SK-N-SH (cell line): ENCODE measurements at regions of chr19 and their contacts with region 1.

Region 1: DNA sequence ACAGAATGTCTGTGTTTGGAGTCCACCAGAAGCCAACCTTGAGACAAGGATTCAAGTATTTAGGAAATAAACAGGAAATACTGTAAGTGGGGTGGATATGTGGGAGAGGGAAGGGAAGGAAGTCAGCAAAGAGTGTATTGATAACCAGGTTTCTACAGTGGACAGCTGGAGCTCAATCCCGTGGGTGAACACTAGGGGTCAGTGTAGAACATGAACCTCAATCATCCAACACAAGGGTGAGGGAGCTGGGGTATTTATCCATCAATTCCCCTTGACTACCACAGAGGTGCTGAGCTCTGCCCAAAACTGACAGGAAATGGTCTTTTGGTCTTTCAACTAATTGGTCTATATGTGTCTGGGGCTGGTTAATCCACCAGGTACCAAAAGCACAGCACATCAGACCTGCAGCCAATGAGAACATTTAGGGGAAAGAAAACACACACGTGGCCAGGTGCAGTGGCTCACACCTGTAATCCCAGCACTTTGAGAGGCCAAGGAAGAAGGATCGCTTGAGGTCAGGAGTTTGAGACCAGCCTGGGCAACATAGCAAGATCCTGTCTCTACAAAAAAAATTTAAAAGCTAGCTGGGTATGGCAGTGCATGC is 5.6 kb upstream of the SYDE1 start:
- DNase-seq: peak; percentile 54
- H3K4me3 ChIP-seq: no peak overlapping the region; a peak in 1 of 4 replicates
- H3K27ac ChIP-seq: no peak overlapping the region
- H3K4me1 ChIP-seq: no peaks in the 10 kb centered on the region
- H3K27me3 ChIP-seq: peaks cover 27% of the 10 kb centered on the region; the same call in 1 of the 2 replicates
- CTCF ChIP-seq: peak; percentile 66
- EP300 ChIP-seq: no peak
- RAD21 ChIP-seq: peak; percentile 63

Region 2: GRCh38 chr19:14496028-14496833 is 605.4 kb before region 1 on chr19 and contains the start of gene GIPC1:
- CTCF ChIA-PET with region 1: no interaction called
- POLR2A ChIA-PET with region 1: no interaction called
- DNase-seq: peak; percentile 100
- H3K4me3 ChIP-seq: peak within 1 kb of the TSS; percentile 65 to 93
- H3K27ac ChIP-seq: peak within 1 kb of the TSS in 1 of 2 experiments; percentile 67; a peak in 2 of 4 replicates
- H3K4me1 ChIP-seq: peaks cover 4 to 25% of the 10 kb centered on the region in 2 experiments; a peak in 2 of 4 replicates
- H3K27me3 ChIP-seq: no peaks in the 10 kb centered on the region
- CTCF ChIP-seq: no peak
- EP300 ChIP-seq: peak in 1 of 2 experiments; percentile 44; a peak in 3 of 4 replicates
- RAD21 ChIP-seq: no peak
- polyA plus RNA-seq, gene GIPC1: 138 and 144 TPM in 2 replicates

Region 3: GRCh38 chr19:15125232-15126067 is 23.9 kb after region 1 on chr19:
- CTCF ChIA-PET with region 1: interaction called, 12 read pairs
- POLR2A ChIA-PET with region 1: no interaction called
- DNase-seq: peak; percentile 99
- H3K4me3 ChIP-seq: peak overlapping the region; percentile 79 to 92
- H3K27ac ChIP-seq: peak overlapping the region; percentile 71 to 88
- H3K4me1 ChIP-seq: peaks cover 0 to 19% of the 10 kb centered on the region in 2 experiments; a peak in 2 of 4 replicates
- H3K27me3 ChIP-seq: no peaks in the 10 kb centered on the region
- CTCF ChIP-seq: no peak
- EP300 ChIP-seq: no peak
- RAD21 ChIP-seq: no peak

Region 4: GRCh38 chr19:15141596-15141995 is 40.0 kb after region 1 on chr19:
- CTCF ChIA-PET with region 1: no interaction called
- POLR2A ChIA-PET with region 1: no interaction called
- DNase-seq: no peak
- H3K4me3 ChIP-seq: no peak overlapping the region
- H3K27ac ChIP-seq: no peak overlapping the region
- H3K4me1 ChIP-seq: no peaks in the 10 kb centered on the region
- H3K27me3 ChIP-seq: no peaks in the 10 kb centered on the region; the same call in 1 of the 2 replicates
- CTCF ChIP-seq: no peak
- EP300 ChIP-seq: no peak
- RAD21 ChIP-seq: no peak

Region 5: GRCh38 chr19:15154002-15154612 is 52.5 kb after region 1 on chr19:
- CTCF ChIA-PET with region 1: interaction called, 57 read pairs
- POLR2A ChIA-PET with region 1: no interaction called
- DNase-seq: peak; percentile 54
- H3K4me3 ChIP-seq: 0 out of 4 replicates have a peak overlapping the region, but pooled peaks of 1 of the 2 experiments have one; percentile 2
- H3K27ac ChIP-seq: no peak overlapping the region
- H3K4me1 ChIP-seq: no peaks in the 10 kb centered on the region
- H3K27me3 ChIP-seq: peaks cover 14% of the 10 kb centered on the region; the same call in 1 of the 2 replicates
- CTCF ChIP-seq: peak; percentile 61
- EP300 ChIP-seq: no peak
- RAD21 ChIP-seq: peak; percentile 38

Region 6: DNA sequence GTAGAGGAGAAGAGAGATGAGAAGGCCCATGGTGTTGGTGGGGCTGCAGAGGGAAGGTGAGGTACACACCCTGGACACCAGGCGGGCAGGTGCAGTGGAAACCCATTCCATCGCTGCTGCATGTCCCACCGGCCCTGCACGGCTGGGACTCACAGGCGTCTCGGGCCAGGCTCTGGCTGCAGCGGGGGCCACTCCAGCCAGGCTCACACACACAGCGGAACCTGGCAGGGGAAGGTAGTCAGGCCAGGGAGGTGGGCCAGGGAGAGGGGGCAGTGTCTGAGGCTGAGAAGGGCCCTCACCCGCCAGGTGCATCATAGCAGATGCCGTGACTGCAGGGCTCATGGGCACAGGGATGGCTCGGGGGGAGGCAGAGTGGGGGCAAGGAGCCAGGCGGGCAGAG is 83.6 kb after region 1 on chr19:
- CTCF ChIA-PET with region 1: no interaction called
- POLR2A ChIA-PET with region 1: no interaction called
- DNase-seq: no peak
- H3K4me3 ChIP-seq: no peak overlapping the region
- H3K27ac ChIP-seq: no peak overlapping the region
- H3K4me1 ChIP-seq: no peaks in the 10 kb centered on the region
- H3K27me3 ChIP-seq: no peaks in the 10 kb centered on the region
- CTCF ChIP-seq: no peak
- EP300 ChIP-seq: no peak
- RAD21 ChIP-seq: no peak